ENCODE measurements at regions of chr12 and their contacts with region 1.

Region 1: GRCh38 chr12:48988030-48988649 is 10.0 kb downstream of the WNT1 start:
- DNase-seq: no peak
- H3K4me3 ChIP-seq: no peak overlapping the region
- CTCF ChIP-seq: peak; percentile 85

Region 2: DNA sequence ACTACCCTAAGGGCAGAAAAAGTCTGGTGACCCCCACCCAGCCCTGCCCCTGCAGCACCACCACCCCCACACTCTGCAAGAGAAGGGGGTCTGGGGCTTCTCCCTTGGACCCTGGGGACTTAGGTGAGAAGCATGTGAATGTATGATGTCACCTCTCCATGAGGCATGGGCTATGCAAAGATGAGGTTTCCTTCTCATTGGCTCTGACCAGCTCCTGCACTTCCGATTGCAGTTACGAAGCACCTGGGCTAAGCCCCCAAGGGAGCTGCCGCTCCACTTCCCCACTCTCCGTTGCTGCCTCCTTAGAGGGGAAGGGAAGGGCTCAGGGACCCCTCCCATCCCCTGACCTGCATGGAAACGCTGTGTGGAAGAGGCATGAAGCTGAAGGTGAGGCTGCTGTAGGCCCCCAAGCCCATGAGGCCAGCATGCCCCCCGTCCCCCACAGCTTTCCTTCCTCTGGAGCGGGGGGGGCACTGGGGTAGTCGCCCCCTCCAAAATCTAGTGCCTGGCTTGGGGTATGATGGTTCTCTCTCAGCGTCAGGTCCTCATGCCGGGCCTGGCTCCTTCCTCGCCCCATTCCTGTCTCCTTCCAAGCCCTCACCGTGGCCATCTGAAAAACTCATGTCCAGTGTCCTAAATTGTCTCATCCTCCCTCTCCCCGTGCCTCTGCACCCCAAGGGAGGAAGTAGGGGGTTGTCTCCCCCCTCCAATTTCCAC is 130.7 kb before region 1 on chr12:
- CTCF ChIA-PET with region 1: interaction called, 66 read pairs
- POLR2A ChIA-PET with region 1: no interaction called
- DNase-seq: no peak
- H3K4me3 ChIP-seq: no peak overlapping the region
- CTCF ChIP-seq: no peak

Region 3: GRCh38 chr12:48924617-48925303 is 63.4 kb before region 1 on chr12:
- CTCF ChIA-PET with region 1: interaction called, 35 read pairs
- POLR2A ChIA-PET with region 1: no interaction called
- DNase-seq: no peak
- H3K4me3 ChIP-seq: peak overlapping the region; percentile 89
- CTCF ChIP-seq: peak; percentile 67